ENCODE measurements at regions of chr3 and their contacts with region 1.

Region 1: GRCh38 chr3:10791627-10792026 is 24.4 kb upstream of the SLC6A11 start:
- DNase-seq: no peak
- ATAC-seq: no peak
- H3K4me3 ChIP-seq: no peak overlapping the region
- H3K27ac ChIP-seq: no peak overlapping the region
- H3K4me1 ChIP-seq: no peaks in the 10 kb centered on the region
- H3K27me3 ChIP-seq: no peaks in the 10 kb centered on the region
- CTCF ChIP-seq: no peak
- POLR2A ChIP-seq: no peak
- RAD21 ChIP-seq: no peak

Region 2: DNA sequence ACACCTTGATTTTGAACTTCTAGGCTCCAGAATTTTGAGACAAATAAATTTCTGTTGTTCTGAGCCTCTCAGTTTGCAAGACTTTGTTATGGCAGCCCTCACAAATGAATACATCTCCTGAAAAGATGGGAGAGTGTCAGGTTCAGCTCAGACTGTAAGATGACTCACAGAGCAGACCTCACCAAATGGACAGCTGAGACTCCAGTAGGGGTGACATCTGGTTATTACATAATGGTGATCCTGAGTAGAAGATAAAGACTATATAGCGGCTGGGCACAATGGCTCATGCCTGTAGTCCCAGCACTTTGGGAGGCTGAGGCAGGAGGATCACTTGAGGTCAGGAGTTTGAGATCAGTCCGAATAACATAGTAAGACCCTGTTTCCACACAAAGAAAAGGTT is 1168.5 kb before region 1 on chr3:
- CTCF ChIA-PET with region 1: no interaction called
- POLR2A ChIA-PET with region 1: no interaction called
- dilution Hi-C with region 1: no loop called
- in situ Hi-C with region 1: no loop called
- intact Hi-C with region 1: no loop called
- DNase-seq: peak; percentile 4
- ATAC-seq: no peak
- H3K4me3 ChIP-seq: no peak overlapping the region
- H3K27ac ChIP-seq: no peak overlapping the region
- H3K4me1 ChIP-seq: no peaks in the 10 kb centered on the region
- H3K27me3 ChIP-seq: no peaks in the 10 kb centered on the region
- CTCF ChIP-seq: no peak
- POLR2A ChIP-seq: no peak
- RAD21 ChIP-seq: no peak

Region 3: DNA sequence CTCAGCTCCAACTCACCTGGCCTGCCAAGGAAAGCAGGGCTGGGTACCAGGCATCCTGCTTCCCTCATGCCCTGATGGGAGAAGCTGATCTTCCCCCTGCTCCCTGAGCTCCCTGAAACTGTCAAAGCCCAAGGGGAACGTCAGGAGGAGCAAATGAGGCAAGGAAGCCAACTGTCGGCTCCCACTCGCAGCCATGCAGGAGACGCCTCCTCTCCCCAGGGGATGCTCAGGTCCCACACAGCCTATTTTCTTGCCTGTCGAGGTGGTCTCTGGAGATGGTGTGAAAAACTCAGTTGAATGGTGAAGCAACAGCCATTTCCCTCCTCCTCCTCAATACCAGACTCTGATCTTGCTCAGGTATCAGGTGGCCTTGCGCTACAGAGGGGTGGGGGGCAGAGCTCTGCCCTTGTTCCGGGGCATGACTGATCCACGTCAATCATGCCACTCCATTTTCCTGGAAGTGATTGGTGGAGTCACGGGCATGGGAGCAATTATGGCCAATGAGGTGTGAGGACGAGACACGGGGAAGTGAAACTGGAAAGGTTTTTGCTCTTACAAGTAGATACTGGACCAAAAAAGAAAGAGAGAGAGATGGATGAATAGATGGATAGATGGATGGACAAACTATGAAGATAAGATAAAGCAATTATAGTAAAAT is 259.2 kb after region 1 on chr3:
- CTCF ChIA-PET with region 1: no interaction called
- POLR2A ChIA-PET with region 1: interaction called, 10 read pairs
- dilution Hi-C with region 1: no loop called
- in situ Hi-C with region 1: no loop called
- intact Hi-C with region 1: no loop called
- DNase-seq: no peak
- ATAC-seq: no peak
- H3K4me3 ChIP-seq: no peak overlapping the region
- H3K27ac ChIP-seq: no peak overlapping the region
- H3K4me1 ChIP-seq: no peaks in the 10 kb centered on the region
- H3K27me3 ChIP-seq: peaks cover 44% of the 10 kb centered on the region
- CTCF ChIP-seq: no peak
- POLR2A ChIP-seq: no peak
- RAD21 ChIP-seq: no peak

Region 4: DNA sequence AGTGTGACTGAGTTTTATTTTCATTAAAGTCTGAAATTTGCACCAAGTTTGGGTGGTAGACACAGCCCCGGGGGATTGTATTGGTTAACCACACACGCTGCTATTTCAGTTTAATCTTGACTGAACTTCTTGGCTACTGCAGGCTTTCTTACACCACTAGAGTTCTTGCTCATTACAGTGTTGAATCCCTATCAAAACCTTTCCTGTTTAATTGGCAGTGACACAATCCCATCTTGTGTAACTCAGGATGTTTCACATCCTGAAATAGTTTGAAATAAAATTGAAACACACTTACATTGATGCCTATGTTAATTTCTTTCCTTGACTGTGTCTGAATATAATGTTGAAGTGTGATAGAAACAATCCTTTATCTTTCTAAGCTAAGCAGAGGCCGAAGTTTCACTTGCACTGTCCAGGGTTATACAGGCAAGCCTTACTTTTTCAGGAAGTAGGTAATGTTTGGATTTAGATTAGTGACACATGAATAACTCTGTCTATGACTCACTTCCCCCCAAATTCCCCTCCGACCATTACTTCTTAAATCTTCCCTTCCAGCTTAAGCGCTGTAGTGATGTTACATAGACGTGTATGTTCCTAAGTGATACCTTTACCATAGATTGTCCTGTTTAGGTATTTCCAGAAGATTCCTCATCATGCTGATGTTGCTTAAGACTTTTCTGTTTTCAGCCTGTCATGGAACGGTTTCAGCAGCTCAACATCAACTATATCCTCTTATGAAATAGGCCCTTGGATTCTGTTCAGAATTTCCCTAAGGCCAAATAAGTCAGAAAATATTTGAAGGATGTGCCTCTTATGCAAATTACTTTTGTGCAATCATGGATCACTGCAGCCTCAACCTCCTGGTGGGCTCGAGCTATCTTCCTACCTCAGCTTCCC is 497.4 kb after region 1 on chr3:
- CTCF ChIA-PET with region 1: no interaction called
- POLR2A ChIA-PET with region 1: no interaction called
- dilution Hi-C with region 1: no loop called
- in situ Hi-C with region 1: no loop called
- intact Hi-C with region 1: no loop called
- DNase-seq: peak; percentile 96
- ATAC-seq: peak; percentile 79
- H3K4me3 ChIP-seq: peak overlapping the region; percentile 10; the same call in 1 of the 2 replicates
- H3K27ac ChIP-seq: peak overlapping the region; percentile 96
- H3K4me1 ChIP-seq: peaks cover 26% of the 10 kb centered on the region
- H3K27me3 ChIP-seq: no peaks in the 10 kb centered on the region
- CTCF ChIP-seq: no peak
- POLR2A ChIP-seq: peak; percentile 56; the same call in 1 of the 2 replicates
- RAD21 ChIP-seq: no peak

Region 5: DNA sequence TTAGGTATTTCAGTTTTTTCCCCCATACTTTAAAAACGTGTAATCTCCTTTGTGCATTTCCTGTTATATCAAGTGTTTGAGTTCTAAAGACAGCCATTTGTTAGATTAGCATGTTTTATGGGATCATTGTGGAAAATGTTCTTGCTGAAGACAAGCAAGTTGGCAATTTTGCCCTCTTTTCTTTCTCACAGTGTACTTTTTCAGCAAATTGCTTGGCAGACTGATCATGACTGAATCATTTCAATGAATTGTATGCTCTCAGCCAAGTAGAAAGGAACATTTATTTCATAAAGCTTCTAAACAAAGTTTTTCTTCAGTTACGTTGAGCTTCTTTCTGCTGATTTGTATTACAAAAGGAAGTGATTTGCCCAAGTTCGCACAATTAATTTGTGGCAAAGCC is 532.2 kb after region 1 on chr3:
- CTCF ChIA-PET with region 1: no interaction called
- POLR2A ChIA-PET with region 1: no interaction called
- dilution Hi-C with region 1: no loop called
- in situ Hi-C with region 1: no loop called
- intact Hi-C with region 1: no loop called
- DNase-seq: peak; percentile 44
- ATAC-seq: peak; percentile 29; the same call in 1 of the 2 replicates
- H3K4me3 ChIP-seq: no peak overlapping the region
- H3K27ac ChIP-seq: no peak overlapping the region
- H3K4me1 ChIP-seq: no peaks in the 10 kb centered on the region
- H3K27me3 ChIP-seq: no peaks in the 10 kb centered on the region
- CTCF ChIP-seq: no peak
- POLR2A ChIP-seq: no peak
- RAD21 ChIP-seq: no peak

Measured in IMR-90 (cell line).